ENCODE measurements at regions of chr4 and their contacts with region 1.

Region 1: GRCh38 chr4:165131247-165131832 is 18.7 kb upstream of the TMEM192 start:
- DNase-seq: peak; percentile 78
- H3K4me3 Mint-ChIP-seq: no peak overlapping the region
- H3K27ac Mint-ChIP-seq: no peak overlapping the region
- H3K4me1 Mint-ChIP-seq: peaks cover 6% of the 10 kb centered on the region
- H3K27me3 Mint-ChIP-seq: no peaks in the 10 kb centered on the region
- CTCF ChIP-seq: peak; percentile 86

Region 2: GRCh38 chr4:165112368-165113139 is 18.8 kb before region 1 on chr4 and contains the start of gene TMEM192:
- CTCF ChIA-PET with region 1: interaction called, 21 read pairs
- POLR2A ChIA-PET with region 1: interaction called, 5 read pairs
- intact Hi-C with region 1: no loop called
- DNase-seq: peak; percentile 95
- H3K4me3 Mint-ChIP-seq: peak within 1 kb of the TSS; percentile 97
- H3K27ac Mint-ChIP-seq: peak within 1 kb of the TSS; percentile 94
- H3K4me1 Mint-ChIP-seq: peaks cover 9% of the 10 kb centered on the region
- H3K27me3 Mint-ChIP-seq: no peaks in the 10 kb centered on the region
- CTCF ChIP-seq: no peak
- total RNA-seq, gene TMEM192: 26.6 and 31.6 TPM in 2 replicates

Region 3: GRCh38 chr4:165207431-165208220 is 76.3 kb after region 1 on chr4 and contains the start of gene KLHL2:
- CTCF ChIA-PET with region 1: interaction called, 10 read pairs
- POLR2A ChIA-PET with region 1: interaction called, 5 read pairs
- intact Hi-C with region 1: loop called (anchors 5 kb)
- DNase-seq: peak; percentile 72
- H3K4me3 Mint-ChIP-seq: peak within 1 kb of the TSS; percentile 73
- H3K27ac Mint-ChIP-seq: peak within 1 kb of the TSS; percentile 90
- H3K4me1 Mint-ChIP-seq: peaks cover 61% of the 10 kb centered on the region
- H3K27me3 Mint-ChIP-seq: no peaks in the 10 kb centered on the region
- CTCF ChIP-seq: no peak
- total RNA-seq, gene KLHL2: 37.1 and 40.0 TPM in 2 replicates

Region 4: GRCh38 chr4:165343353-165344191 is 212.2 kb after region 1 on chr4:
- CTCF ChIA-PET with region 1: interaction called, 26 read pairs
- POLR2A ChIA-PET with region 1: interaction called, 4 read pairs
- intact Hi-C with region 1: loop called (anchors 1 kb)
- DNase-seq: no peak
- H3K4me3 Mint-ChIP-seq: no peak overlapping the region
- H3K27ac Mint-ChIP-seq: no peak overlapping the region
- H3K4me1 Mint-ChIP-seq: no peaks in the 10 kb centered on the region
- H3K27me3 Mint-ChIP-seq: no peaks in the 10 kb centered on the region
- CTCF ChIP-seq: no peak

Region 5: GRCh38 chr4:165464813-165465381 is 333.6 kb after region 1 on chr4:
- CTCF ChIA-PET with region 1: interaction called, 57 read pairs
- POLR2A ChIA-PET with region 1: interaction called, 9 read pairs
- intact Hi-C with region 1: loop called (anchors 1 kb)
- DNase-seq: peak; percentile 41
- H3K4me3 Mint-ChIP-seq: no peak overlapping the region
- H3K27ac Mint-ChIP-seq: no peak overlapping the region
- H3K4me1 Mint-ChIP-seq: peaks cover 5% of the 10 kb centered on the region
- H3K27me3 Mint-ChIP-seq: no peaks in the 10 kb centered on the region
- CTCF ChIP-seq: peak; percentile 78

Region 6: GRCh38 chr4:166091912-166092510 is 960.7 kb after region 1 on chr4:
- CTCF ChIA-PET with region 1: no interaction called
- POLR2A ChIA-PET with region 1: no interaction called
- intact Hi-C with region 1: loop called (anchors 1 kb)
- DNase-seq: peak; percentile 60
- H3K4me3 Mint-ChIP-seq: no peak overlapping the region
- H3K27ac Mint-ChIP-seq: no peak overlapping the region
- H3K4me1 Mint-ChIP-seq: no peaks in the 10 kb centered on the region
- H3K27me3 Mint-ChIP-seq: no peaks in the 10 kb centered on the region
- CTCF ChIP-seq: peak; percentile 63